CD4-positive, alpha-beta T cell (primary cell): ENCODE measurements at regions of chr19 and their contacts with region 1.

Region 1: DNA sequence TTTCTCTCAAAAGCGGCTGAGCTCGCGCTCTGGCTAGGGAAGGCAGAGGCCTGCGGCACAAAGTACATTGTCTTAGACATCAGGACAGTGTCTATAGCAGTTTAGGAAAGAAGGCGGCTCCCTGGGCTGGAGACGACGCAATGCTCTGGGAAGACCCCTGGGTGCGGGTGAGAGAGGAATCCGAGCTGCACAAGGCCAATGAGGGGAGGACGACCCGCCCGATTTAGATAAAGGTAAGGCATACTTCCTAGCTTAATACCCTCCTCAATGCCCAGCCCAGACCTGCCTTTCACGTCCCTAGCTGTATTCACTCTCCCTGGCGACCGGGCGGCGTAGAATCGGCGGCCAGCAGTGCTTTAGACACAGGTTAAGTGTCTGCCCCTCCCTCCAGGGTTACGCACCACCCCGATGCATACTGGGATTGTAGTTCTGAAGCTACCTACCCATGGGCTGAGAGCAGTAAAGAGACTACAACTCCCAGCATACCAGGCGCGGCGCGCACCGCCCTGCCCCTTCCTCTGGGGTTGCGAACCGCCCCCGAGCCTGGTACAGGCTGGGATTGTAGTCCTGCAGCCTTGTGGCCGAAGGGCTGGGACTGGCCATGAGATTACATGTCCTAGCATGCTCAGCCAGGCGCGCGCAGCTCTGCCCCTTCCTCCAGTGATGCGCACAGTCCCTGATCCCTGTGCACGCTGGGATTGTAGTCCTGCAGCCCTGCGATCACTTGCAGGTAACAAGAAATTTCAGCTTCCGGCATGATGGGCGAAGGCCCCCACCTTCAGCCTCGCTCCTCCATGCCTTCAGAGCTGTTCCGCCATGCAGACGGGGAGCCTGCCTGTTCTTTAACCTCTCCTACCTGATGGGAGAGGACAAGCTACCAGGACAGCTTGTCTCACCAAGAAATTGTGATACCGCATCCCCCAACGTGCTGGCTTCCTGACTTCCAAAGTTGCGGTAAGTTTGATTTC is 43.4 kb upstream of the ZNF14 start:
- DNase-seq: peak; percentile 83 to 95 (median 88)
- ATAC-seq: peak; percentile 98
- H3K4me3 ChIP-seq: peak overlapping the region; percentile 85
- H3K4me3 Mint-ChIP-seq: peak overlapping the region; percentile 94
- H3K27ac ChIP-seq: peak overlapping the region; percentile 55 to 74
- H3K27ac Mint-ChIP-seq: peak overlapping the region; percentile 89
- H3K4me1 ChIP-seq: peaks cover 26% of the 10 kb centered on the region
- H3K4me1 Mint-ChIP-seq: peaks cover 50% of the 10 kb centered on the region
- H3K27me3 ChIP-seq: no peaks in the 10 kb centered on the region
- H3K27me3 Mint-ChIP-seq: no peaks in the 10 kb centered on the region
- CTCF ChIP-seq: no peak

Region 2: DNA sequence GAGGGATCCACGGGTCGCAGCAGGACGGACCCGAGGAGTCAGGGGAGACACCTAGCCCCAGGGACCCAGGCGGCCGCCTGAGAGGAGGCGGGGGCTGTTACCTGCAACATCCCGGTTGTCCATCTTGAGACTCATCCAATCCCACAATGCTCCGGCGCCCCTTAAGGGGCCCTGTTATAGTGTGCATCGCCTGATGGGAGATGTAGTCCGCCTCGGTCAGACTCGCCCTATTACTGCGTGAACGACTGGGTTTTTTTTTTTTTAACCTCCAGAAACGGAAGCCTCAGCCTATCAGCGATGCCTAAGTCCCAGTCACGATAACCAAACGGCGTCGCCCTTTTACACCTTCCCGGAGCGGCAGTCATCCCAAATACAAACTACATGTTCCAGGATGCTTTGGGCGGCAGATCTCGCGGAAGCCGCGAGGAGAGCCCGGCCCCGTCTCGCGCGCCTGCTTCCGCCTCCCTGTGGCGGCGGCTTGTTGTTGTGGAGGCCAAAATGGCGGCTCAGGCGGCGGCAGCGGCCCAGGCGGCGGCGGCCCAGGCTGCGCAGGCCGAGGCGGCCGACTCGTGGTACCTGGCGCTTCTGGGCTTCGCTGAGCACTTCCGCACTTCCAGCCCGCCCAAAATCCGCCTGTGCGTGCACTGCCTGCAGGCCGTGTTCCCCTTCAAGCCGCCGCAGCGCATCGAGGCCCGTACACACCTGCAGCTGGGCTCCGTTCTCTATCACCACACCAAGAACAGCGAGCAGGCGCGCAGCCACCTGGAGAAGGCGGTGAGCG is 455.8 kb before region 1 on chr19 and contains the starts of genes MAU2 and SUGP1:
- CTCF ChIA-PET with region 1: no interaction called
- POLR2A ChIA-PET with region 1: no interaction called
- intact Hi-C with region 1: loop called in 1 of 2 experiments (anchors 10 kb)
- DNase-seq: peak; percentile 81 to 96 (median 88)
- ATAC-seq: peak; percentile 88
- H3K4me3 ChIP-seq: peak within 1 kb of the TSS; percentile 71
- H3K4me3 Mint-ChIP-seq: peak within 1 kb of the TSS; percentile 100
- H3K27ac ChIP-seq: peak within 1 kb of the TSS; percentile 92 to 95
- H3K27ac Mint-ChIP-seq: peak within 1 kb of the TSS; percentile 99
- H3K4me1 ChIP-seq: peaks cover 57% of the 10 kb centered on the region
- H3K4me1 Mint-ChIP-seq: peaks cover 43% of the 10 kb centered on the region
- H3K27me3 ChIP-seq: no peaks in the 10 kb centered on the region
- H3K27me3 Mint-ChIP-seq: no peaks in the 10 kb centered on the region
- CTCF ChIP-seq: peak; percentile 16
- total RNA-seq, gene MAU2: 132 to 133 TPM
- total RNA-seq, gene SUGP1: 49.7 to 56.0 TPM

Region 3: GRCh38 chr19:19554074-19555023 is 222.0 kb before region 1 on chr19:
- CTCF ChIA-PET with region 1: no interaction called
- POLR2A ChIA-PET with region 1: no interaction called
- intact Hi-C with region 1: no loop called
- DNase-seq: peak in 13 of 14 experiments; percentile 38 to 76 (median 49)
- ATAC-seq: peak; percentile 42
- H3K4me3 ChIP-seq: no peak overlapping the region
- H3K4me3 Mint-ChIP-seq: no peak overlapping the region
- H3K27ac ChIP-seq: no peak overlapping the region
- H3K27ac Mint-ChIP-seq: no peak overlapping the region
- H3K4me1 ChIP-seq: peaks cover 8% of the 10 kb centered on the region
- H3K4me1 Mint-ChIP-seq: peaks cover 13% of the 10 kb centered on the region
- H3K27me3 ChIP-seq: no peaks in the 10 kb centered on the region
- H3K27me3 Mint-ChIP-seq: no peaks in the 10 kb centered on the region
- CTCF ChIP-seq: peak; percentile 81

Region 4: DNA sequence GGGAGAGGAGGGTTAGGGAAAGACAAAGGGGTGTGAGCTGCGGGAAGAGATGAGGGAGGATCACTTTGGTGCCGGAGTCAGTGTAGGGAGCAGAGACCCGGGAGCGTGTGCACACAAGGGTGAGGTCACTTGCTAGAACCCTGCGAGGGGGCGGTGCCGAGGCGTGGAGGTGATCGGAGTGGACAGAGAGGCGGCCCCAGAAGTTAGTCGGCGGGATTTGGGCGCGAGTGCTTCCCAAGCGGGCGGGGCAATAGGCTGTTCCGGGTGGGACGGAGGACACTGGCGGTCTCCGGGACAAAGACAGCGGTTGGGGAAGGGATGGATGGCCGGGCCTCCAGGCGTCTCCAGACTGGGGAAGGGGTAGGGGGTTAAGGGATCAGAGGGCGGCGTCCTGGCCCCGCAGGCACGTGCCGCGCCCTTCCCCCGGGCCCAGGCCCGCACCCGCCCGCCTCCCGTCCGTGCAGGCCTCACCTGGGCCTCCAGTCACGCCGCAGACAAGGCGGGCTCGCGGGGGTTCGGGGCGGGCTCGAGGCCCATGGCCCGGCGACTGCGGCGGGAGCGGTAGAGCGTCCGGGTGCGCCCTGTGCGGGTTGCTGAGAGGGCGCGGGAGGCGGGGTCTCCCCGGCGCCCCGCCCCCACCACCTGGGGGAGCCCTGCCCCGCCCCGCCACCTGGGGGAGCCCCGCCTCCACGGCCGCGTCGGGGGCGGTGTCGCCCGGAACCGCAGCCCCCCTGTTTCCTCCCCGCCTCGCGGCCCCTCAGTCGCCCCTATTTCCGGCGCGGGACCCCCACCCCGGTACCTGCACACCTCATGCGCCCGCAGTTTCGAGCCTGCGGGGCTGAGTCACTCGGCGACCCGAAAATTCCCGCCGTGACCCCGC is 148.5 kb before region 1 on chr19 and contains the start of gene LPAR2:
- CTCF ChIA-PET with region 1: no interaction called
- POLR2A ChIA-PET with region 1: interaction called, 11 read pairs
- intact Hi-C with region 1: no loop called
- DNase-seq: peak; percentile 65 to 91 (median 80)
- ATAC-seq: peak; percentile 83
- H3K4me3 ChIP-seq: peak within 1 kb of the TSS; percentile 84
- H3K4me3 Mint-ChIP-seq: peak within 1 kb of the TSS; percentile 99
- H3K27ac ChIP-seq: peak within 1 kb of the TSS; percentile 52 to 84
- H3K27ac Mint-ChIP-seq: peak within 1 kb of the TSS; percentile 91
- H3K4me1 ChIP-seq: peaks cover 37% of the 10 kb centered on the region
- H3K4me1 Mint-ChIP-seq: peaks cover 28% of the 10 kb centered on the region
- H3K27me3 ChIP-seq: no peaks in the 10 kb centered on the region
- H3K27me3 Mint-ChIP-seq: no peaks in the 10 kb centered on the region
- CTCF ChIP-seq: no peak
- total RNA-seq, gene LPAR2: 85.9 to 93.7 TPM

Region 5: DNA sequence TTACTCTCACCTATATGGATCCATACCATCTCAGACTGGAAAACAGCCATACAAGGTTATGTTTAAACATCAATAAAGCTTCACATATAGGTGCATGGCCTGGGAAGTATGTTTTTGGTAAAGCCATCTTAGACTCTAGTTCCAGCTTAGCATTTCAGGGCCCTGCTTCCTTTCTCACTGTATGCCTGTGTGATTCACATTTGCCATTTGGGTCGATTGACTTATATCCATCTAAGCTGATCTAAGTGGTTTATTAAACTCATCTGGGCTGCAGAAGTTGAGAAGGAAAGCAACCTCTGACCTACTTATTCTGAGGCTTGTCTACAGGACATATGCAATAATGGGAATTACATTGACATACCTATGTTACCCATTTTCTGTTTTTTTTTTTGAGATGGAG is 11.7 kb after region 1 on chr19:
- CTCF ChIA-PET with region 1: interaction called, 4 read pairs
- POLR2A ChIA-PET with region 1: interaction called, 10 read pairs
- intact Hi-C with region 1: no loop called
- DNase-seq: no peak
- ATAC-seq: no peak
- H3K4me3 ChIP-seq: no peak overlapping the region
- H3K4me3 Mint-ChIP-seq: no peak overlapping the region
- H3K27ac ChIP-seq: no peak overlapping the region
- H3K27ac Mint-ChIP-seq: peak overlapping the region; percentile 36
- H3K4me1 ChIP-seq: peaks cover 2% of the 10 kb centered on the region
- H3K4me1 Mint-ChIP-seq: peaks cover 21% of the 10 kb centered on the region
- H3K27me3 ChIP-seq: no peaks in the 10 kb centered on the region
- H3K27me3 Mint-ChIP-seq: no peaks in the 10 kb centered on the region
- CTCF ChIP-seq: no peak

Region 6: GRCh38 chr19:19865739-19866481 is 89.6 kb after region 1 on chr19 and contains the start of gene ZNF253:
- CTCF ChIA-PET with region 1: interaction called, 3 read pairs
- POLR2A ChIA-PET with region 1: interaction called, 54 read pairs
- intact Hi-C with region 1: loop called (anchors 1 to 2 kb)
- DNase-seq: peak; percentile 88 to 96 (median 94)
- ATAC-seq: peak; percentile 90
- H3K4me3 ChIP-seq: peak within 1 kb of the TSS; percentile 89
- H3K4me3 Mint-ChIP-seq: peak within 1 kb of the TSS; percentile 97
- H3K27ac ChIP-seq: peak within 1 kb of the TSS; percentile 86 to 88
- H3K27ac Mint-ChIP-seq: peak within 1 kb of the TSS; percentile 97
- H3K4me1 ChIP-seq: peaks cover 13% of the 10 kb centered on the region
- H3K4me1 Mint-ChIP-seq: peaks cover 41% of the 10 kb centered on the region
- H3K27me3 ChIP-seq: no peaks in the 10 kb centered on the region
- H3K27me3 Mint-ChIP-seq: no peaks in the 10 kb centered on the region
- CTCF ChIP-seq: no peak
- total RNA-seq, gene ZNF253: 4.9 to 5.2 TPM

Region 7: DNA sequence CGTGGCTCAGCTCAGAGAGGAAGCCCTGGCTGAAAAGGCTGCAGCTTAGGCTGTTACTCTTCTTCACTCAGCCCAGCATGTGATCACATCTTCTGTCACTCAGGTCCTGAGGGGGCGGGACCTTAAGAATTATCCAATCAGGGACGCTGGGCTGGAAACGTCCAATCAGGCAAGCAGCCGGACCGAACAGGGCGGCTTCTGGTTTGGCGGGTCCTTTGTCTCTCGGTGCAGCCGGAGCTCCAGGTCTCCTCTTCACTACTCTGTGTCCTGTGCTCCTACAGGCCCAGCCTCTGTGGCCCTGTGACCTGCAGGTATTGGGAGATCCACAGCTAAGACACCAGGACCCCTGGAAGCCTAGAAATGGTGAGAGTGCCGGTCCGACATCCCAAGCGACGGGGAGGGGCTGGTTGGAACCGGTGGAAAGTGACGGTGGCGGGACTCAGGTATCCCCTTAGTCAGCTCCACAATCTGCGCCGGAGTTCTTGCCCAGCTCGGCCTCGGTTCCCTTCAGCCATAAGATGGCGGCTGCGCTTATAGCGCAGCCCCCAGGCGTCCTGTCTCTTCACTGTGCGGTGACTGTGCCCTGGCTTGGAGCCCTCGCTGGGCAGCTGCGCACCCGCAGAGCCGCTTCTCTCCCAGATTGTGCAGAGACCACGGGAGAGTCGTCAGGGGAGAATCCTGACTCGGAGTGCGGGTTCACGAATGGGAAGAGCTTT is 124.6 kb after region 1 on chr19 and contains the start of gene ZNF93:
- CTCF ChIA-PET with region 1: no interaction called
- POLR2A ChIA-PET with region 1: interaction called, 35 read pairs
- intact Hi-C with region 1: loop called in 1 of 2 experiments (anchors 5 kb)
- DNase-seq: peak; percentile 80 to 96 (median 85)
- ATAC-seq: peak; percentile 97
- H3K4me3 ChIP-seq: peak within 1 kb of the TSS; percentile 96
- H3K4me3 Mint-ChIP-seq: peak within 1 kb of the TSS; percentile 94
- H3K27ac ChIP-seq: peak within 1 kb of the TSS; percentile 70
- H3K27ac Mint-ChIP-seq: peak within 1 kb of the TSS; percentile 82
- H3K4me1 ChIP-seq: peaks cover 20% of the 10 kb centered on the region
- H3K4me1 Mint-ChIP-seq: peaks cover 47% of the 10 kb centered on the region
- H3K27me3 ChIP-seq: no peaks in the 10 kb centered on the region
- H3K27me3 Mint-ChIP-seq: no peaks in the 10 kb centered on the region
- CTCF ChIP-seq: no peak
- total RNA-seq, gene ZNF93: 4.4 to 5.4 TPM

Region 8: DNA sequence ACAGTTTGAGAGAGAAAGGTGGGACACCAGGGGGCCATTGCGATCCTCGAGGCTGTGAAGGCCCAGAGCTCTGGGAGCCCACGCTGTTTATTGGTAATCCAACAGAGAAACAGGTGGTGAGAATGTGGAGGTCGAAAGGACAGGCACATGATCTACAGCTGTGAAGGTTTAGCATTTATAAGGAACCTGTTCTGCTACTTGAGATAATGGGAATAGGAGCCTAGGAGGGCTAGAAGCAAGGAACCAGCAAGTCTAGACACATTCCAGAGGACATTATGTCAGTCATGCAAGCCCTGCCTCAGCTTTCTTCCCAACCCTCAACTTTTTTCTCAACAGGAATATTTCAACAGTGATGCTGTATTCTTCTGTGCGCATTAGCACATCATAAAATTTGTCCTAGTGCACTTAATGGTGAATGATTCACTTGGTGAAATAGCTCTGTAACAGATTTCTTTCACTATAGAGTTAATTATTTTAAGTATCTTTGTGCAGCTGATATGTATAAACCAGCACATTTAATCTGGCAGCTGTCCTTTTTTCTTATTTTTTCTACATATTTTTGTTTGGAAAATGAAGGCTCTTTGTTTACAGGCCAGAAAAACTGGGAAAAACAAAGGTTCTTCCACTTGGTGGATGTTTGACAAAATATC is 326.9 kb after region 1 on chr19:
- CTCF ChIA-PET with region 1: no interaction called
- POLR2A ChIA-PET with region 1: no interaction called
- intact Hi-C with region 1: no loop called
- DNase-seq: no peak
- ATAC-seq: no peak
- H3K4me3 ChIP-seq: no peak overlapping the region
- H3K4me3 Mint-ChIP-seq: no peak overlapping the region
- H3K27ac ChIP-seq: no peak overlapping the region
- H3K27ac Mint-ChIP-seq: no peak overlapping the region
- H3K4me1 ChIP-seq: no peaks in the 10 kb centered on the region
- H3K4me1 Mint-ChIP-seq: no peaks in the 10 kb centered on the region
- H3K27me3 ChIP-seq: no peaks in the 10 kb centered on the region
- H3K27me3 Mint-ChIP-seq: no peaks in the 10 kb centered on the region
- CTCF ChIP-seq: no peak